Naive thymus-derived CD4-positive, alpha-beta T cell (primary cell): ENCODE measurements at regions of chr5 and their contacts with region 1.

Region 1: GRCh38 chr5:131263648-131264450 is at the start of gene CDC42SE2:
- DNase-seq: peak; percentile 81 to 95 (median 90)
- ATAC-seq: peak; percentile 94
- H3K4me3 ChIP-seq: peak within 1 kb of the TSS; percentile 87
- H3K4me3 Mint-ChIP-seq: peak within 1 kb of the TSS; percentile 80 to 97 (median 92)
- H3K27ac ChIP-seq: peak within 1 kb of the TSS; percentile 98
- H3K27ac Mint-ChIP-seq: peak within 1 kb of the TSS; percentile 88 to 98 (median 95)
- H3K4me1 ChIP-seq: peaks cover 36% of the 10 kb centered on the region in 2 donors
- H3K4me1 Mint-ChIP-seq: peaks cover 25 to 61% (median 47%) of the 10 kb centered on the region in 7 donors
- H3K27me3 ChIP-seq: no peaks in the 10 kb centered on the region
- H3K27me3 Mint-ChIP-seq: no peaks in the 10 kb centered on the region
- total RNA-seq, gene CDC42SE2: 143 to 265 (median 215) TPM

Region 2: DNA sequence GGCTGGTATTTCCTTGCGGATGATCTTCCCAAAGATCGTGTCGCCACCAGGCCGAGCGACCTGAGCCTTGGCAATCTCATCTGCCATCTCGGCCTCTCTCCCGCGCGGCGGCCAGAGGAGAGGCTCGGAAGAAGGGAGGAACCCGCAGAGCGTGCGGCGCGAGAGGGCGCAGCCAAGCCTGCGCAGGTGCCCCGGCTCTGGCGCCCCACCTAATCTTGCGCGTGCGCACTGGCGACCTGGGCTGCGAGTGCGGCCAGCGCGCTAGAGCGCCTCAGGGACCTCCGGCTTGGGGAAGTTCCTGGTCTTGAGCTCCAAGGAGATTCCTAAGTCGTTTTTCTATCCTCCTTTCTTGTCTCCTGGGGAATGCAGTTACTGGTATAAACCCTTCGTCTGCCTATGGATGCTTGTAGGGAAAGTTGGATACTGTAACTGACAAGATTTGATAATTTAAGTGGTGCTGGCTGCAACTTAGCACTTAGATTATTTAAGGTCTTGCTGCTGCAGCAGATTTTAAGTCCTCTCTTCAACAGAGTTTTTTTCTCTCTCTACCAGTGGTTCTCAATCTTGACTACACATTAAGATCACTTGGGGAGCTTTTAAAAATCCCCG is 98.6 kb before region 1 on chr5 and contains the start of gene HINT1:
- CTCF ChIA-PET with region 1: interaction called, 11 read pairs
- POLR2A ChIA-PET with region 1: interaction called, 15 read pairs
- intact Hi-C with region 1: loop called (anchors 1 kb)
- DNase-seq: peak; percentile 86 to 98 (median 93)
- ATAC-seq: peak; percentile 89
- H3K4me3 ChIP-seq: peak within 1 kb of the TSS; percentile 97
- H3K4me3 Mint-ChIP-seq: peak within 1 kb of the TSS; percentile 93 to 98 (median 97)
- H3K27ac ChIP-seq: peak within 1 kb of the TSS; percentile 91
- H3K27ac Mint-ChIP-seq: peak within 1 kb of the TSS; percentile 95 to 99 (median 98)
- H3K4me1 ChIP-seq: peaks cover 15 to 23% of the 10 kb centered on the region in 2 donors
- H3K4me1 Mint-ChIP-seq: peaks cover 28 to 74% (median 61%) of the 10 kb centered on the region in 7 donors
- H3K27me3 ChIP-seq: no peaks in the 10 kb centered on the region
- H3K27me3 Mint-ChIP-seq: no peaks in the 10 kb centered on the region
- total RNA-seq, gene HINT1: 172 to 319 (median 233) TPM

Region 3: DNA sequence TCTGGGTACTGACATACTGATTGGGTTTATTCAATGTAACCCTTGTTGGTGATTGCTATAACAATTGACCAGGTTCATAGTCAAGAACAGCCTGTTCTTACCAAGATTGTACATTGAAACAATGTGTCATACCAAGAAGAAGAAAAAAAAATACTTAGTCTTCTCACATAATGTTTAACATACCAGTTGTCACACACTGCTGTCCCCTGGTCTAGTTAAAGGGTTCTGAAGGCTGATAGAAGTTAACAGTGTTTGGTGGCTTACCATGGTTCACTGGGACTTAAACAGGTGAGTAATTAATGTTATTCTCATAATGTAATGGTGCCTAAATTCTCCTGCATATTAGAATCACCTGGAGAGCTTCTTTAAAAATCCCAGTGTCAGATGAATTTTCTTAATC is 18.5 kb before region 1 on chr5:
- CTCF ChIA-PET with region 1: interaction called, 34 read pairs
- POLR2A ChIA-PET with region 1: interaction called, 237 read pairs
- intact Hi-C with region 1: no loop called
- DNase-seq: no peak
- ATAC-seq: no peak
- H3K4me3 ChIP-seq: no peak overlapping the region
- H3K4me3 Mint-ChIP-seq: no peak overlapping the region
- H3K27ac ChIP-seq: no peak overlapping the region
- H3K27ac Mint-ChIP-seq: no peak overlapping the region
- H3K4me1 ChIP-seq: peaks cover 7 to 9% of the 10 kb centered on the region in 2 donors
- H3K4me1 Mint-ChIP-seq: peaks cover 11 to 22% (median 18%) of the 10 kb centered on the region in 7 donors
- H3K27me3 ChIP-seq: no peaks in the 10 kb centered on the region
- H3K27me3 Mint-ChIP-seq: no peaks in the 10 kb centered on the region

Region 4: GRCh38 chr5:131289738-131290137 is 25.9 kb after region 1 on chr5:
- CTCF ChIA-PET with region 1: interaction called, 6 read pairs
- POLR2A ChIA-PET with region 1: interaction called, 28 read pairs
- intact Hi-C with region 1: no loop called
- DNase-seq: peak in 1 of 9 donors; percentile 22
- ATAC-seq: peak; percentile 58
- H3K4me3 ChIP-seq: peak overlapping the region; percentile 55
- H3K4me3 Mint-ChIP-seq: peak overlapping the region; percentile 58 to 92 (median 86)
- H3K27ac ChIP-seq: peak overlapping the region; percentile 75
- H3K27ac Mint-ChIP-seq: peak overlapping the region; percentile 87 to 98 (median 94)
- H3K4me1 ChIP-seq: peaks cover 66 to 76% of the 10 kb centered on the region in 2 donors
- H3K4me1 Mint-ChIP-seq: peaks cover 40 to 94% (median 81%) of the 10 kb centered on the region in 7 donors
- H3K27me3 ChIP-seq: no peaks in the 10 kb centered on the region
- H3K27me3 Mint-ChIP-seq: no peaks in the 10 kb centered on the region

Region 5: GRCh38 chr5:131357739-131358561 is 94.1 kb after region 1 on chr5:
- CTCF ChIA-PET with region 1: interaction called, 14 read pairs
- POLR2A ChIA-PET with region 1: interaction called, 8 read pairs
- intact Hi-C with region 1: loop called in 1 of 2 experiments (anchors 1 kb)
- DNase-seq: peak in 6 of 9 donors; percentile 23 to 52 (median 40)
- ATAC-seq: peak; percentile 73
- H3K4me3 ChIP-seq: no peak overlapping the region
- H3K4me3 Mint-ChIP-seq: peak overlapping the region; percentile 14 to 75 (median 56)
- H3K27ac ChIP-seq: peak overlapping the region; percentile 58
- H3K27ac Mint-ChIP-seq: peak overlapping the region; percentile 82 to 93 (median 86)
- H3K4me1 ChIP-seq: peaks cover 37 to 41% of the 10 kb centered on the region in 2 donors
- H3K4me1 Mint-ChIP-seq: peaks cover 32 to 83% (median 75%) of the 10 kb centered on the region in 7 donors
- H3K27me3 ChIP-seq: no peaks in the 10 kb centered on the region
- H3K27me3 Mint-ChIP-seq: no peaks in the 10 kb centered on the region

Region 6: GRCh38 chr5:131394128-131394527 is 130.3 kb after region 1 on chr5:
- CTCF ChIA-PET with region 1: interaction called, 6 read pairs
- POLR2A ChIA-PET with region 1: interaction called, 16 read pairs
- intact Hi-C with region 1: no loop called
- DNase-seq: peak in 8 of 9 donors; percentile 36 to 84 (median 77)
- ATAC-seq: peak; percentile 97
- H3K4me3 ChIP-seq: no peak overlapping the region
- H3K4me3 Mint-ChIP-seq: peak overlapping the region in 9 of 10 donors; percentile 30 to 85 (median 69)
- H3K27ac ChIP-seq: peak overlapping the region; percentile 84
- H3K27ac Mint-ChIP-seq: peak overlapping the region; percentile 88 to 97 (median 91)
- H3K4me1 ChIP-seq: peaks cover 59 to 61% of the 10 kb centered on the region in 2 donors
- H3K4me1 Mint-ChIP-seq: peaks cover 28 to 95% (median 84%) of the 10 kb centered on the region in 7 donors
- H3K27me3 ChIP-seq: no peaks in the 10 kb centered on the region
- H3K27me3 Mint-ChIP-seq: no peaks in the 10 kb centered on the region

Region 7: GRCh38 chr5:131595088-131596033 is 331.5 kb after region 1 on chr5:
- CTCF ChIA-PET with region 1: no interaction called
- POLR2A ChIA-PET with region 1: no interaction called
- intact Hi-C with region 1: no loop called
- DNase-seq: peak in 7 of 9 donors; percentile 26 to 56 (median 52)
- ATAC-seq: peak; percentile 90
- H3K4me3 ChIP-seq: no peak overlapping the region
- H3K4me3 Mint-ChIP-seq: peak overlapping the region; percentile 3 to 76 (median 64)
- H3K27ac ChIP-seq: peak overlapping the region; percentile 29
- H3K27ac Mint-ChIP-seq: peak overlapping the region; percentile 55 to 84 (median 77)
- H3K4me1 ChIP-seq: peaks cover 20 to 24% of the 10 kb centered on the region in 2 donors
- H3K4me1 Mint-ChIP-seq: peaks cover 29 to 86% (median 78%) of the 10 kb centered on the region in 7 donors
- H3K27me3 ChIP-seq: no peaks in the 10 kb centered on the region
- H3K27me3 Mint-ChIP-seq: no peaks in the 10 kb centered on the region